CD14-positive monocyte (primary cell): ENCODE measurements at regions of chr20 and their contacts with region 1.

Region 1: DNA sequence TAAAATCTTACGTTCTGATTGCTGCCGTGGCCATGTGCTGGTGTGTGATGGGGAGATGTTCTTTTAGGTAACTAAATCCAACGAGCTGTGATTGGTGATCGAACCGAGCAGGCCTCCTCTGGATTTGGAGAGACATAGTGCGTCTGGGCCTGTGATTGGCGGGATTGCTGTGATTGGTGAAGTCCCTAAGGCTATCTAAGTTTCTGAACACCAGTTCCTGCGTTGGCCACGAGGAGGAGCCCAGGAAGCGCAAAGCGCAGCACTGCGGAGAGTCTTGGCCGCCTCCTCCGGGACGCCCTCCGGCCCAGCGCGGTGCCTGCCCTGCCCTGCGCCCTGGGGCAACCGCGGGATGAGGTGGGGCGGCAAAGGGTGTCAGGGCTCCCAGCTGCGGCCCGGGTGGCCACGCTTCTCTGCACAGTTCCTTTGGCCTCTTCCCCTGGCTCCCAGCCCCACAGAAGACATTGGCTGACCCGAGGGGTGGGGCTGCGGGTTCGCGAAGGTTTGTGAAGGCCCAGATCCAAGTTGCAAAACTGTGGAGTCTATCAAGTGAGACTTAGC is 33.0 kb downstream of the HNF4A start:
- DNase-seq: peak; percentile 32 to 61 (median 45)
- H3K4me3 ChIP-seq: no peak overlapping the region
- H3K4me3 Mint-ChIP-seq: peak overlapping the region in 1 of 2 donors; percentile 70
- H3K27ac ChIP-seq: no peak overlapping the region
- H3K27ac Mint-ChIP-seq: no peak overlapping the region
- H3K4me1 ChIP-seq: peaks cover 0 to 6% of the 10 kb centered on the region in 2 donors
- H3K4me1 Mint-ChIP-seq: peaks cover 6% of the 10 kb centered on the region
- H3K27me3 ChIP-seq: peaks cover 0 to 7% of the 10 kb centered on the region in 2 donors
- H3K27me3 Mint-ChIP-seq: peaks cover 12 to 17% (median 17%) of the 10 kb centered on the region in 3 donors
- CTCF ChIP-seq: peak; percentile 86

Region 2: GRCh38 chr20:44460795-44461141 is 72.2 kb after region 1 on chr20:
- intact Hi-C with region 1: loop called in 1 of 2 experiments (anchors 10 kb)
- DNase-seq: peak in 1 of 3 donors; percentile 20
- H3K4me3 ChIP-seq: no peak overlapping the region
- H3K4me3 Mint-ChIP-seq: no peak overlapping the region
- H3K27ac ChIP-seq: no peak overlapping the region
- H3K27ac Mint-ChIP-seq: no peak overlapping the region
- H3K4me1 ChIP-seq: no peaks in the 10 kb centered on the region
- H3K4me1 Mint-ChIP-seq: no peaks in the 10 kb centered on the region
- H3K27me3 ChIP-seq: no peaks in the 10 kb centered on the region
- H3K27me3 Mint-ChIP-seq: peaks cover 0 to 2% (median 1%) of the 10 kb centered on the region in 3 donors
- CTCF ChIP-seq: peak; percentile 36

Region 3: DNA sequence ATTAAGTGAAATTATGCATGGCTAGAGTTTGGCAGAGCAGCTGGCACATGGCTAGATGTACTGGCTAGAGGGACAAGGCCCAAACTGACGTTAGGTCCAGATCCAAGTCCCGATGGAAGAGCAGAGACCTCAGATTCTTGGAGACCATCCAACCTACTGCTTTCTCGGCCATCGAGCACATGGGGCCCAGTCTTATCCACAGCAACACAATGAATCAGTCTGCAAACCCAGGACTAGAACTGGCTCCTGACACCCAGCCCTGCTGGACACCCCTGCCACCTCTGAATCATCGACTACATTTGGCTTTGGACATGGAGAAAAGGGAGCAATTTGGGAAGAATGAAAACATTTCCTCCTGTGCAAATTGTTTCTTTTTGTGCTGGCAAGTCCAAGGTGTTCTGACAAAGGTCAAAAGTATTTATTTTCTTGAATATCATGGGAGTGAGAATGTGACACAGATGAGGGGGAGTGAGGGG is 473.0 kb after region 1 on chr20:
- intact Hi-C with region 1: loop called in 1 of 2 experiments (anchors 10 kb)
- DNase-seq: no peak
- H3K4me3 ChIP-seq: no peak overlapping the region
- H3K4me3 Mint-ChIP-seq: no peak overlapping the region
- H3K27ac ChIP-seq: no peak overlapping the region
- H3K27ac Mint-ChIP-seq: no peak overlapping the region
- H3K4me1 ChIP-seq: peaks cover 0 to 4% of the 10 kb centered on the region in 2 donors
- H3K4me1 Mint-ChIP-seq: peaks cover 4% of the 10 kb centered on the region
- H3K27me3 ChIP-seq: no peaks in the 10 kb centered on the region
- H3K27me3 Mint-ChIP-seq: peaks cover 3 to 13% (median 3%) of the 10 kb centered on the region in 3 donors
- CTCF ChIP-seq: no peak